ENCODE measurements at regions of chr6 and their contacts with region 1.

Region 1: DNA sequence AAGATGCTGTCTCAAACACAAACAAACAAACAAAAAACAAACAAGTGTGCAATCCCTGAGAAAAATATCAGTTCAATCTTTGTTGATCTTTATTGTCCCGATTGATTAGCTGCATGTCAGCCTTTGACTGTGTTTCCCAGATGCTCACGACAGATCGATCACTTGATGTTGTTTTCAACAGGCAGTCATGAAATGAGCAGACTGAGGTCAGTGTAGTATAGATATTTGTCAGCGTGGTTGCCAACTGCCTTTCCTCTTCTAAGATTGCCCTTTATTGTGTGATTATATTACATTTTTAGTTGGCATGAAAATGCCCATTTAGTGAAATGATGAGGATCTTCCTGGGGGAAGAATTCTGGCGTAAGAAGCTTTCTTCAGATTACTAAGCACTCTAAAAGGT is 25.6 kb downstream of the UTRN start:
- DNase-seq: peak; percentile 62
- H3K4me3 Mint-ChIP-seq: peak overlapping the region; percentile 31
- H3K27ac Mint-ChIP-seq: no peak overlapping the region
- H3K4me1 Mint-ChIP-seq: peaks cover 25% of the 10 kb centered on the region
- H3K27me3 Mint-ChIP-seq: peaks cover 2% of the 10 kb centered on the region

Region 2: DNA sequence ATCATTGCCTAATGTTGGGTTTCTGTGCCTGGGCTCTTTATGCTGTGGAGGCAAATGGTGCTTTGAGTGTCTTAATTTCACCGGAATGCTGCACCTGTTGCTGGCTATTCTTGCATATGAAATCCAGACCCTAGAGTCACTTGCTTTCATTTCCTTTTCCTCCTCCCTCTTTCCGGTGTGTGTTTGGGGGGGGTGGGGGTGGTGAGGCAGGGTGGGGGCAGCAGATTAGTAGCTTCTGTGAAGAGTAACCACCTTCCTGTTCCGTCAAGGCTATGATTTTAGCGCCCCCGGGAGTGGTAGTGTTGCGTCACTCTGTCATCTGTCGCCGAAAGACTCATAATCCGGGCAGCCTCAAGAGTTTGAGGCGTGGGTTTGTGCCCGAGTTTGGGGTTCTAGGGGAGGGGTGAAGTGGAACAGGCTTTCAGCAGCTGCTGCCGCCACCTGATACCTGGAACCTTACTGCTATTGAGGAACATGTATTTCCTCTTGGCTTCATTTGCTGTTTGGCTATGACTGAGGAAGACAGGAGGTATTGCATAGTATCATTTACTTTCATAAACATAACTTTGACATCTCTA is 23.5 kb after region 1 on chr6:
- CTCF ChIA-PET with region 1: interaction called, 3 read pairs
- POLR2A ChIA-PET with region 1: no interaction called
- intact Hi-C with region 1: loop called (anchors 2 kb)
- DNase-seq: peak; percentile 84
- H3K4me3 Mint-ChIP-seq: peak overlapping the region; percentile 67
- H3K27ac Mint-ChIP-seq: peak overlapping the region; percentile 67
- H3K4me1 Mint-ChIP-seq: peaks cover 40% of the 10 kb centered on the region
- H3K27me3 Mint-ChIP-seq: no peaks in the 10 kb centered on the region

Region 3: GRCh38 chr6:144637541-144637940 is 326.8 kb after region 1 on chr6:
- CTCF ChIA-PET with region 1: no interaction called
- POLR2A ChIA-PET with region 1: no interaction called
- intact Hi-C with region 1: no loop called
- DNase-seq: no peak
- H3K4me3 Mint-ChIP-seq: no peak overlapping the region
- H3K27ac Mint-ChIP-seq: no peak overlapping the region
- H3K4me1 Mint-ChIP-seq: peaks cover 7% of the 10 kb centered on the region
- H3K27me3 Mint-ChIP-seq: no peaks in the 10 kb centered on the region

Measured in activated CD4-positive, alpha-beta memory T cell treated with anti-CD3 and anti-CD28 coated beads for 36 hours (primary cell).